Lower leg skin (tissue), 4 donors: ENCODE measurements at regions of chr18 and their contacts with region 1.

Region 1: GRCh38 chr18:11947214-11948191 is 33.8 kb upstream of the IMPA2 start:
- DNase-seq: peak; percentile 92 to 98
- H3K4me3 ChIP-seq: peak overlapping the region; percentile 37
- CTCF ChIP-seq: peak in 1 of 3 donors; percentile 52
- POLR2A ChIP-seq: no peak

Region 2: DNA sequence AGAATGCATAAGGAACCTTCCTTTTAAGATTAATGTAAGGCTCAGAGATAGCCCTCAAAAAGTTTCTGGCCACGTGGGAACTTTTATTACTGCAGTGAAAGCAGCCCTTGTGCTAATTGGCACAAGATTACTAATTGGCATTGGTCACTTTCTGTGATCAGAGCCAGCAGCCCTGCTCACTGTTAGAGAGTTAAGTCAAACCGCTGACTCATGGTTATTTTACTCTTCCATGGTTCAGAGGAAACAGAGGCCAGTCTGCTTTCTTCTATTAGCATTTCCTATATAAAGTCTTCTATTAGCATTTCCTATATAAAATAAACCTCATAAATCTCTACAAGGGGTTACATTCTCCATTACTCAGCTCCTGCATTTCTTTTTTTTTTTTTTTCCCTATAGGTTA is 339.6 kb before region 1 on chr18:
- intact Hi-C with region 1: no loop called
- DNase-seq: no peak
- H3K4me3 ChIP-seq: no peak overlapping the region
- CTCF ChIP-seq: no peak
- POLR2A ChIP-seq: no peak

Region 3: DNA sequence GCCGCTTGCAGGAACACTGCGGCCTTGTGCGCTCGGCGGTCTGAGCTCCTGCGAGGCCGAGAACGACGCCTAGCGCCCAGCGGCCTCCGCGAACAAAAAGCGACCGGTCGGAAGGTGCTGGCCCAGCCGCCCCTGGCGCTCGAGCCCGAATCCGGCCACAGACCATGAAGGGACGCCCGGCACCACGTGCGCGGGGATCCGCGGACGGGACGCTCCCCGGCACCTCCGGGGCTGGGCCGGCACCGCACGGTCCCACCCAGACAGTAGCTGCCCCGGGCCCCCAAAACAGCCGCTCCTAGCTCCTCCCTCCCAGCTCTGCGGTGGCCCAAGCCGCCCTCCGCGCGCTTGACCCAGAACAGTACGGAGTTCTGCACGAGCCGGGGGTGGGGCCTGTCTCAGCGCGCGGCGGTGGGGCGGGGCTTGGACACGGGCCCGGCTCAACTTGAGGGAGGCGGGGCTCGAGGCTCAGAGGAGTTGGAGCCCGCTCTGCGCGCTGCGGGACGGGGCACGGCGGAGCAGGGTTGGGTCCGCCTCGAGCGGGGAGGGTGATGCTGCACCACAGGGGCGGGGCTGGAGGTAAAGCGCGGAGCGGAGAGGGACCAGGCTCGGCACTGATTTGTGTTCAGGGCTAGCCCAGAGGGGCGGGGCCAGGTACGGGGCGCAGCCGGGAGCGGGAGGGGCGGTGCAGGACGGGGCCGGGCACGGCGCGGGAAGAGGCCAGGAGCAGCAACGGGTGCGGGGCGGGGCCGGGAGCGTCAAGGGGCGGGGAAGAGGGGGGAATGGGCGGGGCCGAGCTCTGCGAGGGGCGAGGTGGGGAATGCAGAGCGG is 33.3 kb after region 1 on chr18:
- intact Hi-C with region 1: loop called (anchors 5 kb)
- DNase-seq: peak; percentile 98 to 100
- H3K4me3 ChIP-seq: peak overlapping the region; percentile 26
- CTCF ChIP-seq: peak in 1 of 3 donors; percentile 16
- POLR2A ChIP-seq: no peak

Region 4: GRCh38 chr18:11995445-11996189 is 48.1 kb after region 1 on chr18:
- intact Hi-C with region 1: no loop called
- DNase-seq: peak; percentile 70 to 94
- H3K4me3 ChIP-seq: no peak overlapping the region
- CTCF ChIP-seq: peak in 1 of 3 donors; percentile 63
- POLR2A ChIP-seq: no peak